AG04449 (cell line): ENCODE measurements at regions of chr12 and their contacts with region 1.

Region 1: DNA sequence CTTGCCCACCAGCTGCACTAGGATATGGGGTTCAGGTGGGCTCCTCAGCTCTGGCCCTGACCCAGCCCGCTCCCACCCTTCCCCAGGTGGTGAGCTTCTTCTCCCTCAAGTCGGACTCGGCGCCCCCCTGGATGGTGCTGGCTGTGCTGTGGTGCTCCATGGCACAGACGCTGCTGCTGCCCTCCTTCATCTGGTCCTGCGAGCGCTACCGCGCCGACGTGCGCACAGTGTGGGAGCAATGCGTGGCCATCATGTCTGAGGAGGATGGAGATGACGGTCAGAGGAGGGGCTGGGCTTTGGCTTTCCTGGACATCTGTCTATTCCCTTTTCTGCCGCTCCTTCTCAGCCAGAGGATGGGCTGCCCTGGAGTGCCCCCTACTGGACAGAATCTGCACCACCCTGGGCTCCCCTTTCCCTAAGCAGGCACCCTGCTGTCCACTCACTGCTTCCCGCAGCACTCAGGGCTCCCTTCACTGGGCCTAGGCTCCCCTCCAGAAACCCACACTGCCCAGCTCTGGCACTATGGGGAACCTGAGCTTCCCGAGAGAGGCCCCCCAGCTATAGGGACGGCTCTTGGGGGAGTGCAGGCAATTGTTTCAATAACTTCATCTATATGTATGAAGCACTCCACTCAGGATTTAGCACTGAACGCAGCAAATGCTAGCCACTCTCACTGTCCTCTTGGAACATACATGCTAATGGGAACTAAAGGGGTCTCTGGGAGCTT is 2.6 kb upstream of the P3H3 start:
- DNase-seq: peak; percentile 26
- H3K4me3 ChIP-seq: peak overlapping the region; percentile 48
- CTCF ChIP-seq: peak; percentile 90

Region 2: DNA sequence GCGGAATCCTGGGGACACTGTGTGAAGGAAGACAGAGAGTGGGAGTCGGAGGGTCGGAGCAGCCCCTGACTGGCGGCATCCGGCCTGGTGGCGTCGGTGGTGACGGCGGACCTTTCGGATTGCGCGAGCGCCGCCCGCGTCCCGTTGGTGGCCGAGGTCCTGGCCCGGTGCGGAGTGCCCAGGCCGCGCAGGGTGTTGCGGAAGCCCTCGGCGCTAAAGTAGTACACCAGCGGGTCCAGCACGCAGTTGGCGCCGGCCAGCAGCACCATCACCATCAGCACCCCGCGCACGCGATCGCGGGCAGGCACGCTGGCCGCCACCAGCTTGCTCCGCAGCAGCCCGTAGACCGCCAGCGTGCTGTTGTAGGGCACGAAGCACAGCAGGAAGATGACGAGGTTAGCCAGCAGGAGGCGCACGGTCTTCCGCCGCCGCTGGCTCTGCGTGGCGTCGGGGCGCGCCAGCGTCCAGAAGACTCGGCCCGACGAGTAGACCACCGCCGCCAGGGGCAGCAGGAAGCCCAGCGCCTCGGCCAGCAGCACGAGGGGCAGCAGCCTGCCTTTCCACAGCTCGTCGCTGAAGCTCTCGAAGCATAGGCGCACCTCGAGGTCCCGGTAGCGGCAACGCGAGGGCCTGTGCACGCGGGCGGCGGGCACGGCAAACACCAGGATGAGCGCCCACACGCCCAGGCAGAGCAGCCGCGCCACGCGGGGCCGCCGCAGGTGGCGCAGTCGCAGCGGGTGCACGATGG is 205.2 kb before region 1 on chr12:
- CTCF ChIA-PET with region 1: interaction called, 25 read pairs
- POLR2A ChIA-PET with region 1: no interaction called
- DNase-seq: no peak
- H3K4me3 ChIP-seq: peak overlapping the region; percentile 18; the same call in 1 of the 2 replicates
- CTCF ChIP-seq: peak; percentile 73

Region 3: DNA sequence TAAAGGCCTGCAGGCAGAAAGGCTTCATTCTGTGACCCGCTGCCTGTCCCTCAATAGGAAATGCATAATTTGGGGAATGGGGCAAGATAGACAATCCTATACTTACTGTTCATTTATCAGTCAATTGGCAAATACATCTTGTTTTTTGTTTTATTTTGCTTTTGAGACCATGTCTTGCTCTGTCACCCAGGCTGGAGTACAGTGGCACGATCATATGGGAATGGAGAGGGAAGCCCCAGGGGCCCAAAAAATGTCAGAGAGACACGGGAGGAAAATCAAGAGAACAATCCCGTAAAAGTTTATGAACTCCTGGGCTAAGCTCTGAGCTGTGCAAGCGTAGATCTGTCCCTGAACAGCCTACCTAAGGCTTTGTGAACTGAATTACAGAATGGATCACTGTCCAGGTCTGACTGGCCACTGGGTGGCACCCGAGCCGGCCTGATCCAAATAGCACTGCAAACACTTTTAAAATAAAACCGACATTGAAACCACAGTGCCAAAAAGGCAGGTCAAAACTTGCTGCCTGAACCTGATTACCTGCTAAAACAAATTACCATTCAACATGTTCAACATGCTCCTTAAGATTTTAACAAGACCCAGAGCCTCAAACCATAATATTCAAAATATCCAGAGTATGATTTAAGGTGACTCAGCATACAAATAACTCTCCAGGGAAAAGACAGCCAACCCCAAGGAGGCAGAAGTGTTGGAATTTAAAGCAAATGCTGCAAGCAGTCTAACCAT is 89.9 kb before region 1 on chr12:
- CTCF ChIA-PET with region 1: interaction called, 82 read pairs
- POLR2A ChIA-PET with region 1: interaction called, 3 read pairs
- DNase-seq: no peak
- H3K4me3 ChIP-seq: no peak overlapping the region
- CTCF ChIP-seq: peak; percentile 60

Region 4: GRCh38 chr12:6764011-6764828 is 61.3 kb before region 1 on chr12:
- CTCF ChIA-PET with region 1: interaction called, 51 read pairs
- POLR2A ChIA-PET with region 1: interaction called, 14 read pairs
- DNase-seq: peak; percentile 97
- H3K4me3 ChIP-seq: peak overlapping the region; percentile 16
- CTCF ChIP-seq: no peak

Region 5: DNA sequence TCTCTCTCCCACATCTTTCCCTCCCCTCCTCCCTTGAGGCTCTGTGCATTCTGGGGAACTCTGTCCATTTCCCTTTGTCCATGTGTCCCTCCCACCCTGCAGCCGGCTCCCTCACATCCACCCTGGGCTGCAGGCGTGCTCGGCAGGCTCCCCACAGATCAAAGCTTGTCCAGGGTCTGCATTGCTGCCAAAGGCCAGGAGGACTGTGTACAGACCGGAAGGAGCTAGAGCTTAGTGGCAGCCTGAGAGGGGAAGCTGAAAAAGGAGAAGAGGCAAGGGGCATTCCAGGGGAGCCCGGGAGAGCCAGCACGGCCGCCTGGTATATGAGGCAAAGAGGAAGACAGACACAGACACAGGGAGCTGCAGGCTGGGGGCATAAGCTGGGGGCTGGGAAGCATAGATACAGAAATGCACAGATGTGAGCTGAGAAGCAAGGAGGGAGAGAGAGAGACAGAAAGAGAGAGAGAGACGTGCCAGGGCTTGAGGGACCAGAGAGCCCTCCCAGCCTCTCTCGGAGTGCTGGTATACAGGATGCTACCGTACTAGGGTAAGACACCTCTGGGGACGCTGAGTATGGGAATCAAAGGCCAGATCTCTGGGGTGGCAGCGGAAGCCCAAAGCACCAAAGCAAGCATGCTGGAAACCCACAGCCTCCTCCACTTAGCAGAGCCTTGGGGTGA is 32.9 kb before region 1 on chr12:
- CTCF ChIA-PET with region 1: interaction called, 60 read pairs
- POLR2A ChIA-PET with region 1: interaction called, 4 read pairs
- DNase-seq: no peak
- H3K4me3 ChIP-seq: peak overlapping the region; percentile 6; the same call in 1 of the 2 replicates
- CTCF ChIP-seq: no peak

Region 6: GRCh38 chr12:6839482-6840201 is 14.1 kb after region 1 on chr12:
- CTCF ChIA-PET with region 1: interaction called, 316 read pairs
- POLR2A ChIA-PET with region 1: interaction called, 17 read pairs
- DNase-seq: no peak
- H3K4me3 ChIP-seq: no peak overlapping the region
- CTCF ChIP-seq: no peak

Region 7: GRCh38 chr12:6867413-6868210 is 42.1 kb after region 1 on chr12 and contains the start of gene TPI1:
- CTCF ChIA-PET with region 1: interaction called, 8 read pairs
- POLR2A ChIA-PET with region 1: interaction called, 25 read pairs
- DNase-seq: no peak
- H3K4me3 ChIP-seq: peak within 1 kb of the TSS; percentile 96
- CTCF ChIP-seq: no peak